Motor neuron (in vitro differentiated cells): ENCODE measurements at regions of chr11 and their contacts with region 1.

Region 1: GRCh38 chr11:82900277-82901164 is at the start of gene PRCP:
- ATAC-seq: peak; percentile 81 to 87 (median 84)
- H3K4me3 ChIP-seq: peak within 1 kb of the TSS; percentile 57 to 91 (median 76)
- H3K27ac ChIP-seq: peak within 1 kb of the TSS; percentile 48 to 81
- H3K4me1 ChIP-seq: peaks cover 13 to 14% of the 10 kb centered on the region in 2 donors
- total RNA-seq, gene PRCP: 19.6 to 118 (median 27.8) TPM

Region 2: GRCh38 chr11:82790723-82791484 is 109.6 kb before region 1 on chr11:
- in situ Hi-C with region 1: no loop called
- ATAC-seq: peak in 6 of 8 experiments; percentile 38 to 89 (median 80)
- H3K4me3 ChIP-seq: no peak overlapping the region
- H3K27ac ChIP-seq: no peak overlapping the region
- H3K4me1 ChIP-seq: peaks cover 15 to 35% of the 10 kb centered on the region in 2 donors

Region 3: DNA sequence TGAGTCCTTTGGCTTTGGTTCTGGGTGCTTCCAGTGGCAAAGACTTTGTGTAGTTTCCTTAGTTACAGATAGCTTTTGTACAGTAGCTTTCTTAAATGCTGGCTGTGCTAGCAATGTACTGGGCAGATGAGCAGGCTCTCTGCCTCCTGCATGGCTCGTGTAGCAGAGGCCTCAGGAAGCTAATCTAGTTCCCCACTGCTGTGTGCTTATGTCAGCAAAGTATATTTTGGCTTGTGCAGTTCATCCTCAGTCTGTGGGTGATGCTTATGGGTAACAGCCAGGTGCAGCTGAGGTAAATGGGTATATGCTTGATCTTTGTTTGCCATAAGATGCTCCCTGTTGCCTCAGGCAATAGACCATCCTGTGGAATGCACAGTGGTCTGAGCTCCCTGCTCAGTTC is 97.8 kb before region 1 on chr11:
- in situ Hi-C with region 1: no loop called
- ATAC-seq: peak in 1 of 8 experiments; percentile 81
- H3K4me3 ChIP-seq: no peak overlapping the region
- H3K27ac ChIP-seq: no peak overlapping the region
- H3K4me1 ChIP-seq: peaks cover 9 to 24% of the 10 kb centered on the region in 2 donors

Region 4: DNA sequence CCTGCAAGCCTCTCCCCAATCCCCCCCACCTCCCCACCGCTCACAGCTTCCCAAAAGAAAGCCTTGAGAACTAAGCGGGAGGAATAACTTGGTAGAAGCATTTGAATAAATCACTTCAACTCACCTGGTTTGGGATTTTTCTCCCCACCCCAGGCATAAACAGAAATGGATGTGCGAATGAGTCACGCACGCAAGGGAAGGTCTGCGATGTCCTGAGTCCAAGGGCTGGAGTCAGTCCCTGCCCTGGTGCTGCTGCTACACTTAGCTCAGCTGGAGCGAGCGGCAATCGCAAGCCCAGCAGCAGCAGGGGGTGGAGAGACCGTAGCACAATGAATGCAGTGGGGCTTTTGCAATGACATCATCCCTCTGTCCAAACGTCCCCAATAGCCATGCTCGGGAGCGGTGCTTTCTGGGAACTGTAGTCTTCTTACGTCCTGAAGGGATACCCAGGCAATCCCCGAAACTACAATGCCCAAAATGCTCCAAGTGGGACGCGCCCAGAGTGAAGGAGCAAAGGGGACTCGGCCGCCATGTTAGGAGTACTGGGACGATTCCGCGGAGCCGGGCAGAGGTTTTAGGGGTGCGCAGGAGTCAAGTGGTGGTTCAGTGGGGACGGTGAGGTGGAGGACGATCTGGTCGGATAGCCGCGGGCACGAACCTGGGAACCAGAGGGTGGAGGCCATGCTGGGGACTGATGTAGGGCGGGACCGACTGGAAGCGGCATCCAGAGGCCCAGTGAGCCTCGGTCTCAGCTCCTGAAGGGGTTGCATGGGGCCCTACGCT is 171.2 kb after region 1 on chr11 and contains the start of gene RAB30:
- in situ Hi-C with region 1: loop called in 1 of 9 experiments (anchors 25 kb)
- ATAC-seq: peak; percentile 93 to 98 (median 97)
- H3K4me3 ChIP-seq: peak within 1 kb of the TSS; percentile 69 to 96 (median 86)
- H3K27ac ChIP-seq: peak within 1 kb of the TSS; percentile 90 to 92
- H3K4me1 ChIP-seq: peaks cover 12 to 16% of the 10 kb centered on the region in 2 donors
- total RNA-seq, gene RAB30: 13.4 to 32.6 (median 19.7) TPM

Region 5: GRCh38 chr11:83193315-83194280 is 293.1 kb after region 1 on chr11 and contains the start of gene ANKRD42:
- in situ Hi-C with region 1: loop called in 1 of 9 experiments (anchors 25 kb)
- ATAC-seq: peak; percentile 80 to 97 (median 94)
- H3K4me3 ChIP-seq: peak within 1 kb of the TSS; percentile 63 to 95 (median 82)
- H3K27ac ChIP-seq: peak within 1 kb of the TSS; percentile 57 to 80
- H3K4me1 ChIP-seq: peaks cover 3 to 12% of the 10 kb centered on the region in 2 donors
- total RNA-seq, gene ANKRD42: 5.0 to 31.5 (median 9.1) TPM

Region 6: GRCh38 chr11:83219095-83219494 is 318.6 kb after region 1 on chr11:
- in situ Hi-C with region 1: loop called in 1 of 9 experiments (anchors 25 kb)
- ATAC-seq: no peak
- H3K4me3 ChIP-seq: no peak overlapping the region
- H3K27ac ChIP-seq: no peak overlapping the region
- H3K4me1 ChIP-seq: no peaks in the 10 kb centered on the region

Region 7: GRCh38 chr11:83241291-83241946 is 340.9 kb after region 1 on chr11:
- in situ Hi-C with region 1: loop called in 2 of 9 experiments (anchors 25 kb)
- ATAC-seq: peak; percentile 76 to 100 (median 94)
- H3K4me3 ChIP-seq: no peak overlapping the region
- H3K27ac ChIP-seq: no peak overlapping the region
- H3K4me1 ChIP-seq: no peaks in the 10 kb centered on the region

Region 8: DNA sequence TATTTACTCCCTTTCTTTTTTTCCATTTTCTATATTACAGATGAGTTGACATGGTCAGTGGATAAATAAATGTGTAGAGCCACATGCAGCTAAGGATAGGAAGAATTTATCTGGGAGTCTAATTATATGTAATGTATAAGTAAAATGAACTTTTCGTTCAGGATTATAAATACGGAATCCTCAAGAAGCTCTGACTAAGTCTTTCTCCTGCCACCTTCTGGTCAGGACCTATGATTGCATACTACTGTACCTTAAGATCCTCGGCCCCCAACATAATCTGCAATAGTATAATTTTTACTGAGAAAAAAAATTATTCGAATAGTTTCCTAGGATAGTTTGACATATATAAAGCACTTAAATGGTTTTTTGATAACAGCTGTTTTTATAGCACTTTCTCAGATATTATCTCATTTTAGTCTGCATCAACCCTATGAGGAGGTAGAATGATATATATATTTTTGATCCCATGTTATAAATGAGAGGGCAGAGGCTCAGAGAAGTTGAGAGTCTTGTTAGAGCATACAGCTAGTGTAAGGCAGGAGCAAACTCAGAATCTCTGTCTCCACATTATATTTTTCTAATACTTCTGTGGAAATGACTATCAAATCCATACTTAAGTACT is 349.6 kb after region 1 on chr11:
- in situ Hi-C with region 1: loop called in 4 of 9 experiments (anchors 25 kb)
- ATAC-seq: peak in 4 of 8 experiments; percentile 39 to 68 (median 58)
- H3K4me3 ChIP-seq: no peak overlapping the region
- H3K27ac ChIP-seq: no peak overlapping the region
- H3K4me1 ChIP-seq: no peaks in the 10 kb centered on the region

Region 9: GRCh38 chr11:83819933-83820549 is 919.5 kb after region 1 on chr11:
- in situ Hi-C with region 1: loop called in 6 of 9 experiments (anchors 25 kb)
- ATAC-seq: peak in 7 of 8 experiments; percentile 38 to 78 (median 62)
- H3K4me3 ChIP-seq: no peak overlapping the region
- H3K27ac ChIP-seq: no peak overlapping the region
- H3K4me1 ChIP-seq: peaks cover 0 to 6% of the 10 kb centered on the region in 2 donors